K562 (cell line): ENCODE measurements at regions of chr6 and their contacts with region 1.

Region 1: GRCh38 chr6:26196846-26197648 is 109.8 kb downstream of the HFE start:
- DNase-seq: peak; percentile 89 to 93 (median 90)
- ATAC-seq: peak; percentile 53
- H3K4me3 ChIP-seq: peak overlapping the region; percentile 86
- H3K27ac ChIP-seq: peak overlapping the region; percentile 99
- H3K4me1 ChIP-seq: peaks cover 7 to 13% of the 10 kb centered on the region in 2 experiments
- H3K27me3 ChIP-seq: no peaks in the 10 kb centered on the region
- CTCF ChIP-seq: 0 out of 6 replicates have a peak, but pooled peaks of 1 of the 3 experiments have one; percentile 19
- EP300 ChIP-seq: peak; percentile 43
- POLR2A ChIP-seq: peak; percentile 97
- RAD21 ChIP-seq: 0 out of 4 replicates have a peak, but pooled peaks of 1 of the 2 experiments have one; percentile 8

Region 2: DNA sequence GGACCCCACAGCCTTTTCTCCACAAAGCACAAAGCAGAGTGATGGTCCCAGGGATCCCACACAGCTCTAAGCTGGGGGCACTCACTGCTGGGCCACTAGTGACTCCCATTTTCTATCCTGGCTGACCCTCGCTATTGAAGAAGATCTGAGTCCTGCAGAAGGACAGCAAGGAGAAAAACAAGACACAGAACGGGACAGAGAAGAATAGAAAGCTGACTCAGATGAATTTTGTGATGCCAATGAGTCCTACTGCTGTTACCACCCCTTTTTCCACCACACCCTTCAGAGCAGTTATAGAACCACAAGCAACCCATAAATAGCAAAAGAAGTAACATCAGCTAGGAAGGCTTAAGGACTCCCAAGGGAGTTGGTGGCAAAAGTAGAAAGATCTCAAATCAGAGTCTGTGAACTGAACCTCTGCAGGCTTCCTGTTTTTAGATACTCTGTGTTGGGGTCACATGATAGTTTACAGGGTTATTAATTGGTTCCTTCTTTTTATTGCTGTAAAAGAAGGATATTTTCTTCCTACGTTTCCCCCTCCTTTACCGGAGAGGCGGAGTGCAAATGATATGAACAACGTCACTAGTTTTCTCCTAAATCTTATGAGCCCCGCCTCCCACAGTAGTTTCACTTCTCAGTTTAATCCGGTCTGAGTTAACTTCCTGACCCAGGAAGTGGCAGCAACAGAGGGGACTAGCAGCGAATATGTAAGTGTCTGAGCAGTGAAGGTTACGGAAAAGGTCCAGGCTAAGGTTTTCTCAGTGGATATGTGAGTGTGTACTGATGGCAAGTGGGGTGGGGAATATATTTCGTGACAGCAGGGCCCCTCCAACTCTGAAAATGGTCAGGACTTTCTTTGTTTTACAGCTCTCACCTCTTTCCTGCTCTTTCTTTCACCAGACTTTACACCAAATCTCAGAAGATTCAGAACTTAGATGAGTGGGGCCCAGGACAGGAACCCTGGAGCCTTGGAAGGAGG is 234.6 kb before region 1 on chr6 and contains the start of gene TRIM38:
- CTCF ChIA-PET with region 1: no interaction called
- POLR2A ChIA-PET with region 1: no interaction called
- in situ Hi-C with region 1: no loop called
- intact Hi-C with region 1: no loop called
- DNase-seq: peak; percentile 68 to 88 (median 77)
- ATAC-seq: peak; percentile 90
- H3K4me3 ChIP-seq: peak within 1 kb of the TSS; percentile 51
- H3K27ac ChIP-seq: peak within 1 kb of the TSS; percentile 86
- H3K4me1 ChIP-seq: peaks cover 6 to 19% of the 10 kb centered on the region in 2 experiments; a peak in 3 of 5 replicates
- H3K27me3 ChIP-seq: no peaks in the 10 kb centered on the region
- CTCF ChIP-seq: no peak
- EP300 ChIP-seq: no peak; the same call in 1 of the 2 replicates
- POLR2A ChIP-seq: peak; percentile 91
- RAD21 ChIP-seq: 0 out of 4 replicates have a peak, but pooled peaks of 1 of the 2 experiments have one; percentile 12
- polyA plus RNA-seq, gene TRIM38: 1.7 to 2.3 TPM

Region 3: DNA sequence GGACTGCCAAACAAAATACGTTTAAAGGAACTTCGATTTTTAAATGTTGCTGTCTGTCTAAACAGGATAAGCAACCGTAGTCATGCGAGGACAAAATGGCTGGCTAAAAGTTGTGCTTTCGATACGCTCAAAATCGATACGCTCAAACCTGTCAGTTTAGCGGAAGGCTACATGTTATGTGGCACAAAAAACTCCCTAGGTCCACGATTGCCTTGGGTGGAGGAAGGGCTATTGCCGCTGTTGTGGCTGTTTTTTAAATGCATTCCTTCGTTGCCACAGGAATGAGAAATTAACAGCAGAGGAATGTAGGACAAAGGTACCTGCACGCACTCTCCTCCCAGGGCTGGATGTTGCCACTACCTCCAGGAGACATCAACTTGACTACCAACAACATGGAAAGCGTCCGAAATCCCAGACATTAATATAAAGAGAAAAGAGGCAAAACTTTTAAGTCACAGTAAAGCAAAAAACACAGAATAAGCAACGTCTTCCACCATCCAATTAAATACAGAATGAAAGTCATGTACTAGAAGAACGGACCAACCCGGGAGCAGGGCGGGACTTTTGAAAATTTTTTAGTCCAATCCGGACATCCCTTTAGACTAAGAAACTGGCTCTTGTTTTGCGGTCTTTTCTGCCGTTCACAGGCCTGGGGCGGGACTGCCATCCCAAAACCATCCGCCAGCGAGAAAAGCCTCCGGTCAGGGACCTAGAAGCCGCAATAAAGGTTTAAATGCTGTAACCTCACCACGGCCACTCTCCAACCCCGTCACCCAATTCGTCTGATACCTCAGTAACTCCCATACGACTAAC is 142.0 kb before region 1 on chr6:
- CTCF ChIA-PET with region 1: interaction called, 4 read pairs
- POLR2A ChIA-PET with region 1: interaction called, 23 read pairs
- in situ Hi-C with region 1: no loop called
- intact Hi-C with region 1: loop called (anchors 1 kb)
- DNase-seq: peak; percentile 81 to 95 (median 88)
- ATAC-seq: peak; percentile 68
- H3K4me3 ChIP-seq: peak overlapping the region; percentile 60
- H3K27ac ChIP-seq: peak overlapping the region; percentile 94
- H3K4me1 ChIP-seq: peaks cover 7 to 29% of the 10 kb centered on the region in 2 experiments
- H3K27me3 ChIP-seq: no peaks in the 10 kb centered on the region
- CTCF ChIP-seq: peak; percentile 24 to 42 (median 29); a peak in 3 of 6 replicates
- EP300 ChIP-seq: peak; percentile 34
- POLR2A ChIP-seq: peak; percentile 95
- RAD21 ChIP-seq: peak in 1 of 2 experiments; percentile 59; a peak in 2 of 4 replicates

Region 4: GRCh38 chr6:26163427-26164119 is 33.5 kb before region 1 on chr6:
- CTCF ChIA-PET with region 1: no interaction called
- POLR2A ChIA-PET with region 1: interaction called, 245 read pairs
- in situ Hi-C with region 1: no loop called
- intact Hi-C with region 1: no loop called
- DNase-seq: no peak
- ATAC-seq: no peak
- H3K4me3 ChIP-seq: no peak overlapping the region
- H3K27ac ChIP-seq: no peak overlapping the region
- H3K4me1 ChIP-seq: peaks cover 0 to 24% of the 10 kb centered on the region in 2 experiments; a peak in 3 of 5 replicates
- H3K27me3 ChIP-seq: no peaks in the 10 kb centered on the region
- CTCF ChIP-seq: no peak
- EP300 ChIP-seq: no peak
- POLR2A ChIP-seq: no peak
- RAD21 ChIP-seq: no peak

Region 5: GRCh38 chr6:26234421-26235296 is 37.6 kb after region 1 on chr6:
- CTCF ChIA-PET with region 1: no interaction called
- POLR2A ChIA-PET with region 1: interaction called, 47 read pairs
- in situ Hi-C with region 1: no loop called
- intact Hi-C with region 1: no loop called
- DNase-seq: peak; percentile 71 to 93 (median 83)
- ATAC-seq: peak; percentile 89
- H3K4me3 ChIP-seq: peak overlapping the region; percentile 40
- H3K27ac ChIP-seq: peak overlapping the region; percentile 73
- H3K4me1 ChIP-seq: peaks cover 16 to 20% of the 10 kb centered on the region in 2 experiments; a peak in 4 of 5 replicates
- H3K27me3 ChIP-seq: no peaks in the 10 kb centered on the region
- CTCF ChIP-seq: no peak
- EP300 ChIP-seq: no peak; the same call in 1 of the 2 replicates
- POLR2A ChIP-seq: peak; percentile 99
- RAD21 ChIP-seq: no peak; a peak in 1 of 4 replicates

Region 6: GRCh38 chr6:26285143-26286134 is 88.4 kb after region 1 on chr6:
- CTCF ChIA-PET with region 1: no interaction called
- POLR2A ChIA-PET with region 1: interaction called, 73 read pairs
- in situ Hi-C with region 1: no loop called
- intact Hi-C with region 1: no loop called
- DNase-seq: peak; percentile 89 to 100 (median 92)
- ATAC-seq: peak; percentile 84
- H3K4me3 ChIP-seq: peak overlapping the region; percentile 50
- H3K27ac ChIP-seq: peak overlapping the region; percentile 97
- H3K4me1 ChIP-seq: peaks cover 11 to 19% of the 10 kb centered on the region in 2 experiments; a peak in 4 of 5 replicates
- H3K27me3 ChIP-seq: no peaks in the 10 kb centered on the region
- CTCF ChIP-seq: peak in 1 of 3 experiments; percentile 5; a peak in 2 of 6 replicates
- EP300 ChIP-seq: peak; percentile 96
- POLR2A ChIP-seq: peak; percentile 99
- RAD21 ChIP-seq: peak in 1 of 2 experiments; percentile 41; a peak in 3 of 4 replicates

Region 7: GRCh38 chr6:26322645-26323482 is 125.8 kb after region 1 on chr6:
- CTCF ChIA-PET with region 1: no interaction called
- POLR2A ChIA-PET with region 1: interaction called, 71 read pairs
- in situ Hi-C with region 1: no loop called
- intact Hi-C with region 1: no loop called
- DNase-seq: peak in 3 of 4 experiments; percentile 43 to 96 (median 81)
- ATAC-seq: peak; percentile 62
- H3K4me3 ChIP-seq: peak overlapping the region; percentile 59
- H3K27ac ChIP-seq: peak overlapping the region; percentile 75
- H3K4me1 ChIP-seq: peaks cover 8 to 24% of the 10 kb centered on the region in 2 experiments
- H3K27me3 ChIP-seq: no peaks in the 10 kb centered on the region
- CTCF ChIP-seq: no peak
- EP300 ChIP-seq: peak; percentile 54
- POLR2A ChIP-seq: no peak
- RAD21 ChIP-seq: peak in 1 of 2 experiments; percentile 27; a peak in 1 of 4 replicates

Region 8: GRCh38 chr6:27049863-27050781 is 853.1 kb after region 1 on chr6:
- CTCF ChIA-PET with region 1: no interaction called
- POLR2A ChIA-PET with region 1: no interaction called
- in situ Hi-C with region 1: no loop called
- intact Hi-C with region 1: no loop called
- DNase-seq: no peak
- ATAC-seq: peak; percentile 66
- H3K4me3 ChIP-seq: no peak overlapping the region
- H3K27ac ChIP-seq: no peak overlapping the region
- H3K4me1 ChIP-seq: peaks cover 0 to 4% of the 10 kb centered on the region in 2 experiments; a peak in 3 of 5 replicates
- H3K27me3 ChIP-seq: no peaks in the 10 kb centered on the region
- CTCF ChIP-seq: no peak
- EP300 ChIP-seq: no peak
- POLR2A ChIP-seq: no peak
- RAD21 ChIP-seq: no peak

Region 9: DNA sequence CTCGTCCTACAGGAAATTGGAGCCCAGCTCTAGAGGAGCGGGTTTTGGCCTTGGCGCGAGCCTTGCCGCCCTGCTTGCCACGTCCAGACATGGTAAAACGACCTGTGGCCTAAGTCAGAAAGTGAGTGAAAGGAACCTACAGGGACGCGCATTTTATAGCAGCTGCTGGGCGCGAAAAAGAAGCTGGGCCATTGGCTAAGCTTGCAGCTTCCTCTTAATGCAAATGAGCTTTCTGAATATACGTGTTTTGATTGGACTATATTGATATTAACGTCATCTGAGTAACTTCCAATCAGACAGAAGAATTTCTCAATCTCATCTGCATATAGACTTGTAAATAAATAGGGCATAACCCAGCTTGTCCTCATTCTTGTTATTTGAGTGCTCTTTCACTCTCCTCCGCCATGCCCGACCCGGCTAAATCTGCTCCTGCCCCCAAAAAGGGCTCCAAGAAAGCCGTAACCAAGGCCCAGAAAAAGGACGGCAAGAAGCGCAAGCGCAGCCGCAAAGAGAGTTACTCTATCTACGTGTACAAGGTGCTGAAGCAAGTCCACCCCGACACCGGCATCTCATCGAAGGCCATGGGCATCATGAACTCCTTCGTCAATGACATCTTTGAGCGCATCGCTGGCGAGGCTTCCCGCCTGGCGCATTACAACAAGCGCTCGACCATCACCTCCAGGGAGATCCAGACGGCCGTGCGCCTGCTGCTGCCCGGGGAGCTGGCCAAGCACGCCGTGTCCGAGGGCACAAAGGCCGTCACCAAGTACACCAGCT is 1696.2 kb after region 1 on chr6:
- CTCF ChIA-PET with region 1: no interaction called
- POLR2A ChIA-PET with region 1: interaction called, 14 read pairs
- in situ Hi-C with region 1: no loop called
- intact Hi-C with region 1: no loop called
- DNase-seq: peak; percentile 84 to 99 (median 92)
- ATAC-seq: peak; percentile 71
- H3K4me3 ChIP-seq: peak overlapping the region; percentile 79
- H3K27ac ChIP-seq: peak overlapping the region; percentile 95
- H3K4me1 ChIP-seq: peaks cover 19 to 38% of the 10 kb centered on the region in 2 experiments
- H3K27me3 ChIP-seq: no peaks in the 10 kb centered on the region
- CTCF ChIP-seq: peak in 1 of 3 experiments; percentile 14; a peak in 1 of 6 replicates
- EP300 ChIP-seq: peak; percentile 62; the same call in 1 of the 2 replicates
- POLR2A ChIP-seq: peak; percentile 100
- RAD21 ChIP-seq: no peak